ENCODE measurements at regions of chr3 and their contacts with region 1.

Region 1: GRCh38 chr3:17979252-17979651 is 236.8 kb upstream of the TBC1D5 start:
- DNase-seq: peak; percentile 73
- H3K4me3 ChIP-seq: no peak overlapping the region
- H3K27ac ChIP-seq: peak overlapping the region in 3 of 4 donors; percentile 35 to 60 (median 51)
- H3K4me1 ChIP-seq: peaks cover 0 to 54% (median 29%) of the 10 kb centered on the region in 4 donors
- H3K27me3 ChIP-seq: no peaks in the 10 kb centered on the region
- CTCF ChIP-seq: peak in 1 of 4 experiments; percentile 30
- EP300 ChIP-seq: no peak
- POLR2A ChIP-seq: no peak

Region 2: GRCh38 chr3:17742108-17742879 is 237.0 kb before region 1 on chr3 and contains the start of gene TBC1D5:
- intact Hi-C with region 1: loop called (anchors 10 kb)
- DNase-seq: peak; percentile 99
- H3K4me3 ChIP-seq: peak within 1 kb of the TSS; percentile 76 to 95 (median 94)
- H3K27ac ChIP-seq: peak within 1 kb of the TSS; percentile 97 to 100 (median 98)
- H3K4me1 ChIP-seq: peaks cover 0 to 37% (median 30%) of the 10 kb centered on the region in 4 donors
- H3K27me3 ChIP-seq: no peaks in the 10 kb centered on the region
- CTCF ChIP-seq: peak in 2 of 4 experiments; percentile 5 to 16
- EP300 ChIP-seq: peak in 1 of 4 donors; percentile 35
- POLR2A ChIP-seq: peak; percentile 70 to 71
- total RNA-seq, gene TBC1D5: 43.7 to 82.3 (median 50.8) TPM

Region 3: GRCh38 chr3:17949101-17949500 is 30.2 kb before region 1 on chr3:
- intact Hi-C with region 1: no loop called
- DNase-seq: no peak
- H3K4me3 ChIP-seq: no peak overlapping the region
- H3K27ac ChIP-seq: no peak overlapping the region
- H3K4me1 ChIP-seq: no peaks in the 10 kb centered on the region
- H3K27me3 ChIP-seq: no peaks in the 10 kb centered on the region
- CTCF ChIP-seq: no peak
- EP300 ChIP-seq: no peak
- POLR2A ChIP-seq: no peak

Region 4: GRCh38 chr3:18211116-18211515 is 231.9 kb after region 1 on chr3:
- intact Hi-C with region 1: loop called (anchors 5 kb)
- DNase-seq: no peak
- H3K4me3 ChIP-seq: no peak overlapping the region
- H3K27ac ChIP-seq: no peak overlapping the region
- H3K4me1 ChIP-seq: no peaks in the 10 kb centered on the region
- H3K27me3 ChIP-seq: no peaks in the 10 kb centered on the region
- CTCF ChIP-seq: no peak
- EP300 ChIP-seq: no peak
- POLR2A ChIP-seq: no peak

Region 5: GRCh38 chr3:18389108-18389733 is 410.0 kb after region 1 on chr3:
- intact Hi-C with region 1: loop called (anchors 10 kb)
- DNase-seq: no peak
- H3K4me3 ChIP-seq: no peak overlapping the region
- H3K27ac ChIP-seq: no peak overlapping the region
- H3K4me1 ChIP-seq: no peaks in the 10 kb centered on the region
- H3K27me3 ChIP-seq: no peaks in the 10 kb centered on the region
- CTCF ChIP-seq: peak in 3 of 4 experiments; percentile 20 to 61 (median 22)
- EP300 ChIP-seq: no peak
- POLR2A ChIP-seq: no peak

Region 6: GRCh38 chr3:18444595-18445400 is 465.5 kb after region 1 on chr3:
- intact Hi-C with region 1: loop called (anchors 10 kb)
- DNase-seq: peak; percentile 82
- H3K4me3 ChIP-seq: peak overlapping the region; percentile 52 to 71 (median 69)
- H3K27ac ChIP-seq: peak overlapping the region; percentile 63 to 89 (median 82)
- H3K4me1 ChIP-seq: peaks cover 0 to 31% (median 27%) of the 10 kb centered on the region in 4 donors
- H3K27me3 ChIP-seq: no peaks in the 10 kb centered on the region
- CTCF ChIP-seq: peak in 1 of 4 experiments; percentile 19
- EP300 ChIP-seq: no peak
- POLR2A ChIP-seq: no peak

Measured in sigmoid colon (tissue), 7 donors.